ENCODE measurements at regions of chr7 and their contacts with region 1.

Region 1: GRCh38 chr7:27662490-27663205 is at the start of gene HIBADH:
- DNase-seq: peak; percentile 99
- H3K4me3 Mint-ChIP-seq: peak within 1 kb of the TSS; percentile 86
- H3K27ac Mint-ChIP-seq: peak within 1 kb of the TSS; percentile 91
- H3K4me1 Mint-ChIP-seq: peaks cover 21% of the 10 kb centered on the region
- H3K27me3 Mint-ChIP-seq: peaks cover 3% of the 10 kb centered on the region
- total RNA-seq, gene HIBADH: 21.5 and 22.6 TPM in 2 replicates

Region 2: DNA sequence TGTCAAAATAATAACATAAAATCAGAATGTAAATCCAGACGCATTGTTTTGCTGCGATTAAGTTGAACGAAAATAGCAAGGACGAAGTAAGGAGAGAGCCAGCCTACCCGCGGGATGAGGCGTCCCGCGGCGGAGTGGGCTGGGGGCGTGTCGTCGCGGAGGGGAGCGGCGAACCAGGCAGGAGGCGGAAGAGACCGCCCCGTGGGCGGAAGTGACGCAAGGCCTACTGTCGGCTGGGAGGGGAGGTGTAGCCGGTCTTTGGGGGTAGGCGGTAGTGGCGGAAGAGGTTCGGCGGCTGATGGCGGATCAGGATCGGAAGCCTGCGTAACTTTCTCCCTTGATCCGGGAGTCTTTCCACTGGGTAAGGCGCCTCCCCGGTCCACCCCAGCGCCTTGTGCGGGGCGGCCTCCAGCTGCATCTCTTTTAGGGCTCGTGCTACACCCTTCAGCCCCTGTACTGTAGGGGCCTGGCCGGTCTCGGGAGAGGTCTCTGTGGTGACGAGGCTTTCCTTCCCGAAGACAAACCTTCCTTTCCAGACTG is 77.3 kb after region 1 on chr7 and contains the start of gene TAX1BP1:
- intact Hi-C with region 1: loop called (anchors 1 kb)
- DNase-seq: peak; percentile 99
- H3K4me3 Mint-ChIP-seq: peak within 1 kb of the TSS; percentile 94
- H3K27ac Mint-ChIP-seq: peak within 1 kb of the TSS; percentile 97
- H3K4me1 Mint-ChIP-seq: peaks cover 27% of the 10 kb centered on the region
- H3K27me3 Mint-ChIP-seq: peaks cover 11% of the 10 kb centered on the region
- total RNA-seq, gene TAX1BP1: 80.3 and 91.5 TPM in 2 replicates

Region 3: GRCh38 chr7:27901028-27901760 is 238.5 kb after region 1 on chr7:
- intact Hi-C with region 1: loop called (anchors 2 kb)
- DNase-seq: peak; percentile 83
- H3K4me3 Mint-ChIP-seq: peak overlapping the region; percentile 37
- H3K27ac Mint-ChIP-seq: no peak overlapping the region
- H3K4me1 Mint-ChIP-seq: peaks cover 22% of the 10 kb centered on the region
- H3K27me3 Mint-ChIP-seq: peaks cover 11% of the 10 kb centered on the region

Region 4: DNA sequence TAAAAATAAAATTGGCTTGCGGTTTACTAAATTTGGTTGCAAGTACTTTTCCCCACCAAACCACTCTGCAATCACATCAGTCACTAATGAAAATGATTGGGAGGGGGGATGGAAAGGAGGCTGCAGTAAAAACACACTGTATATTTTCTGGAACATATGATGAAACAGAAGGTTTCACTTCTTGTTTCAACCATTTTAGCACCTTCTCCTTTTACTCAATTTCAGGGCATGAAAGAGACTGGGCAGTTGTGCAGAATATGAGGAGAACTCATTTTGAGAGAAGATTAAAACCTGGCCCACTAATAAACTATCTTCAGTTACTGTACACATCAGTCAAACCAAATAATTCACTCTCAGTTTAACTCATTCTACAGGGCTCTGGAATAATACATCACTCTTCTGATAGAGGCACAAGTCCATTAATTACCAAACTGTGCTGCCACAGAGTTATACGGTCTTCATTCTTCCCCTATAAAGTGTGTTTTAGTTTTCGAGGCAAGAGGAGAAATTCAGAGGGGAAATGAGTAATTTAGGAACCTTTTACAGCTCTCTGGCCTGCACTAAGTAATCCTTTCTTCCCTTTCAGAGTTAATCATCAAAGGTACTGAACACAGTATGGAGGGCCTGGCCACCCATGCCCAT is 492.5 kb after region 1 on chr7:
- intact Hi-C with region 1: loop called (anchors 5 kb)
- DNase-seq: no peak
- H3K4me3 Mint-ChIP-seq: peak overlapping the region; percentile 34
- H3K27ac Mint-ChIP-seq: peak overlapping the region; percentile 83
- H3K4me1 Mint-ChIP-seq: peaks cover 37% of the 10 kb centered on the region
- H3K27me3 Mint-ChIP-seq: peaks cover 11% of the 10 kb centered on the region